ENCODE measurements at regions of chr17 and their contacts with region 1.

Region 1: GRCh38 chr17:67469208-67469895 is 92.3 kb downstream of the PITPNC1 start:
- DNase-seq: no peak
- ATAC-seq: no peak
- H3K4me3 ChIP-seq: no peak overlapping the region
- H3K27ac ChIP-seq: peak overlapping the region in 1 of 4 donors; percentile 39
- H3K4me1 ChIP-seq: no peaks in the 10 kb centered on the region
- H3K27me3 ChIP-seq: no peaks in the 10 kb centered on the region
- CTCF ChIP-seq: no peak
- POLR2A ChIP-seq: no peak

Region 2: GRCh38 chr17:67386965-67387551 is 82.3 kb before region 1 on chr17:
- intact Hi-C with region 1: loop called (anchors 5 kb)
- DNase-seq: peak; percentile 24 to 53 (median 50)
- ATAC-seq: no peak
- H3K4me3 ChIP-seq: no peak overlapping the region
- H3K27ac ChIP-seq: no peak overlapping the region
- H3K4me1 ChIP-seq: peaks cover 26% of the 10 kb centered on the region
- H3K27me3 ChIP-seq: no peaks in the 10 kb centered on the region
- CTCF ChIP-seq: peak; percentile 45 to 70 (median 54)
- POLR2A ChIP-seq: no peak